ENCODE measurements at regions of chr17 and their contacts with region 1.

Region 1: DNA sequence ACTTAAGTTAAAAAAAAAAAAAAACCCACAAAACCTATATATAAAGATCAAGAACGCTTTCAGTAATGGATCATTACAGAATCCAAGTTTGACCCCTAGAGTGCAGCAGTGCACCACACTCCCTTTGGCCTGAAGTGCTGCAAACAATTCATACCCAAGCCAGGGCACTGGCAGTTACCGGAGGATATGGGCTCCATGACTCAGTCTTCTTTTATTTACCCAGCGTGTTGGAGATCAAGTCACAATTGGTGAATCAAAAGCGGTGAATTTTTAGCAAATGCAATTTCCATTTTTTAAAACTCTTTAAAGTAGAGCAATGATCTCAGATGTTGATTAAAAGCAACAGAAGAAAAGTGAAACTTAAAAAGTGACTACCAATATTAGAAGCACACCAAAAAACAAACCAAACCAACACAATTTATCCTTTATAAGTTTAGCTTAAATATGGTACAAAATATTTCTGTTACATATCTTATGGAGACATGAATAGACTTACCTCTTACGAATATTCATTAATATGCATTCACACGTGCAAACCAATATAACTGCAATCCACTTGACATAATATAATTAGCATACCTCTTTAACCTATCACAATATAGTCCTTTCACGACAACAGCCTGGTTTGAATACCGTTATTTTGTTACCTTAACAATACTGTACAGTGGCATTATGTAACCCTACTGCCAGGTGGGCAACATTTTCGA is 46.3 kb downstream of the ZNF652 start:
- DNase-seq: peak; percentile 80
- H3K4me3 ChIP-seq: no peak overlapping the region
- H3K27ac ChIP-seq: no peak overlapping the region
- H3K4me1 ChIP-seq: peaks cover 5% of the 10 kb centered on the region
- H3K27me3 ChIP-seq: no peaks in the 10 kb centered on the region
- CTCF ChIP-seq: peak; percentile 77 to 85

Region 2: DNA sequence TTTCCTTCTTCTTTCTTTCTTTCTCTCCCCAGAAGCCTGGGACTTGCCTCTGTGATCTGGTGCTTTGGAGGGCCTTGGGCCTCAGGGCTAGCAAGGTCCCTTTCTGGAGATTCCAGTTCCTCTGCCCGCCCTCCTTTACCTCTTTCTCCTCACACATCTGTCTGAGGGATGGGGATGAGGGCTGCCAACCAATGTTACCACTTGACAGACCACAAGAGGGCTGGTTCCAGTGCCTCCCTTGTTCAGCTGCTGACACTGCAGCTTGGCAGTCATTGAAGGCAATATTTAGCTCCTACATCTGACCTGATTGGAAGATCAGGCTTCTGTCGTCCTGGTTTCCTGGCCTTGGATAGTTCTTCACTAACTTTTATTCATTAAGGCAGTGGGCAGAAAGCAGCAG is 50.0 kb after region 1 on chr17:
- CTCF ChIA-PET with region 1: no interaction called
- dilution Hi-C with region 1: no loop called
- in situ Hi-C with region 1: no loop called
- intact Hi-C with region 1: loop called (anchors 1 kb)
- DNase-seq: no peak
- H3K4me3 ChIP-seq: no peak overlapping the region
- H3K27ac ChIP-seq: no peak overlapping the region
- H3K4me1 ChIP-seq: peaks cover 9% of the 10 kb centered on the region
- H3K27me3 ChIP-seq: no peaks in the 10 kb centered on the region
- CTCF ChIP-seq: peak; percentile 17 to 29

Region 3: GRCh38 chr17:49390548-49391324 is 75.0 kb after region 1 on chr17:
- CTCF ChIA-PET with region 1: no interaction called
- dilution Hi-C with region 1: no loop called
- in situ Hi-C with region 1: loop called (anchors 5 kb)
- intact Hi-C with region 1: loop called (anchors 1 kb)
- DNase-seq: no peak
- H3K4me3 ChIP-seq: no peak overlapping the region
- H3K27ac ChIP-seq: no peak overlapping the region
- H3K4me1 ChIP-seq: no peaks in the 10 kb centered on the region
- H3K27me3 ChIP-seq: no peaks in the 10 kb centered on the region
- CTCF ChIP-seq: no peak

Region 4: DNA sequence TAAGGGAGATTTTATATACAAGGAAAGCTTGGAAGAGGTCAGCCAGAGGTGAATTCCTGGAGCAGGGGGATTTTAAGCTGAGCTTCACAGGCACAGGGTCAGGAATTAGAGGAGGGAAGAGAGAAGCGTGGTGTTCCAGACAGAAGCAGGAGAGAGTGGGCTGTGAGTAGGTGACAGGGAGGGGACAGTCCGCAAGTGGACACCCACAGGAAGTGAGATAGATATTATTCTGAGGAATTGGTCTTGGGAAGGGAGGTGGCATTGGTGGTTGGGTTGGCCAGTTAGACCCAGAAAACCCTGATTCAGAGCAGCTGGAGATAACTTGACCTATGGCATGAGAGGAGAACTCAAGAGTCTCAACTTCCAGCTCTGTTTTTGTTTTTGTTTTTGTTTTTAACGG is 84.3 kb after region 1 on chr17:
- CTCF ChIA-PET with region 1: no interaction called
- dilution Hi-C with region 1: no loop called
- in situ Hi-C with region 1: loop called in 1 of 2 experiments (anchors 5 kb)
- intact Hi-C with region 1: loop called (anchors 1 kb)
- DNase-seq: no peak
- H3K4me3 ChIP-seq: no peak overlapping the region
- H3K27ac ChIP-seq: no peak overlapping the region
- H3K4me1 ChIP-seq: no peaks in the 10 kb centered on the region
- H3K27me3 ChIP-seq: no peaks in the 10 kb centered on the region
- CTCF ChIP-seq: no peak

Region 5: GRCh38 chr17:49496183-49496866 is 180.6 kb after region 1 on chr17:
- CTCF ChIA-PET with region 1: no interaction called
- dilution Hi-C with region 1: no loop called
- in situ Hi-C with region 1: no loop called
- intact Hi-C with region 1: loop called (anchors 2 kb)
- DNase-seq: peak; percentile 59
- H3K4me3 ChIP-seq: peak overlapping the region; percentile 60 to 79 (median 63)
- H3K27ac ChIP-seq: no peak overlapping the region
- H3K4me1 ChIP-seq: peaks cover 24% of the 10 kb centered on the region
- H3K27me3 ChIP-seq: no peaks in the 10 kb centered on the region
- CTCF ChIP-seq: peak; percentile 52 to 73

Region 6: GRCh38 chr17:49548506-49549310 is 233.0 kb after region 1 on chr17:
- CTCF ChIA-PET with region 1: no interaction called
- dilution Hi-C with region 1: no loop called
- in situ Hi-C with region 1: loop called in 1 of 2 experiments (anchors 25 kb)
- intact Hi-C with region 1: loop called (anchors 2 kb)
- DNase-seq: peak; percentile 51
- H3K4me3 ChIP-seq: no peak overlapping the region
- H3K27ac ChIP-seq: no peak overlapping the region
- H3K4me1 ChIP-seq: peaks cover 19% of the 10 kb centered on the region
- H3K27me3 ChIP-seq: no peaks in the 10 kb centered on the region
- CTCF ChIP-seq: peak; percentile 77

Measured in mammary epithelial cell (primary cell).